HEK293T (cell line): ENCODE measurements at regions of chr2 and their contacts with region 1.

Region 1: DNA sequence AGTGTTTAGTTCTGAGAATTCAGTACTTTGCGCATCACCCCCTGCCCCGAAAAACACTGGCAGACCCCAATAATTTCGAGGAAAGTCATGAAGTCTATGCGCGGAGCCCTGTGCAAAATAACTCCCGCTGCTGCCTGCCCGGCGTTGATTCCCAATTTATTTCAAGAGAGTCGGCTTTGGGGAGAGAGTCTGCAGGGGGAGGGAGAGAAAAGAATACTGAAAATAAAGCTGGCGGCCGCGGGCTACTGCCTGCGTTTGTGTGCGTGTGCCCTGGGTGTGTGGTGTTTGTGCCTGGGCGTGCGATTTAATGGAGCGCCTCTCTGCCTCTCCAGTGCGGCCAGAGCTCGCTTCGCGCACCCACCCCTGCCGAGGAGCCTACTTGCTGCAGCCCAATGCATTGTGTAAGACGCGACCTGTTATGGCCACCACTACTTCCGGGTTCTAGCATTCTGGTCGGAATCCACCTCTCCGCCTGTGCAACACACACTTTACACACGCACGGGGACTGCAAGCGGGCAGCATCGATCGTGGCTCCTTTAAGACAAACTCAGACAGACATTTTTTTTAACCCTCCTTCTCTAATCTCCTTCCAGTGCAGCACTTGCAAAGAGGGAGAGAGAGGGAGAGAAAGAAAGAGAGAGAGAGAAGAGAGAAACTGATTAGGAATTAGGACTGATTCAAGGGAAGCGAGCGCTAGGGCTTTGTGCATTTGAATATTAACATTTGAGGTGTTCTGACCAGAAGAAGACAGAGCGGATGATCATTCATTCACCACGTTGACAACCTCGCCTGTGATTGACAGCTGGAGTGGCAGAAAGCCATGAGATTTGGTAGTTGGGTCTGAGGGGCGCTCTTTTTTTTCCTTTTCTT is at the start of gene MEIS1:
- DNase-seq: peak; percentile 76

Region 2: DNA sequence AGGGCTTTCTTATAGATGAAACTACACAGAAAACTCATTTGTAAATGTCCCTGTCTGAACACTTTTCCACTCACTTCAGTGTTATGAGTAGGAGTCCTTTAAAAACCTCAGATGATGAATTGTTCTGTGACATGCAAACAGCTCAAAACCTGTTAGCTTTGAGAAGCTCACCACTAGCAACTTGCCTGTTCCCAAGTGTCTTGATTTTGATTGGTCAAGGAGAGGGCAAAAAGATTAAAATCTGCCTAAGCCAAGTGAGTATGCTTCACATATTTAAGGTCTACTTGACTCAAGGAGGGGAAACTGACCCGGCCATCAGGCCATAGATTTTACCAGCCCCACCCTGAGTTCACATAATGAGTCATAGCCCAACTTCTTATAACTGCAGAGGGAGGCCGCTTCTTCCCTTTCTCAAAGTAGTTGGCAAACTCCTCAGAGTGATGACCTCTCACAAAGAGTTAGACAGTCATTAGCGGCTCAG is 45.2 kb before region 1 on chr2:
- CTCF ChIA-PET with region 1: no interaction called
- POLR2A ChIA-PET with region 1: interaction called, 19 read pairs
- DNase-seq: peak; percentile 21

Region 3: GRCh38 chr2:66497431-66498288 is 62.7 kb after region 1 on chr2:
- CTCF ChIA-PET with region 1: interaction called, 7 read pairs
- POLR2A ChIA-PET with region 1: interaction called, 25 read pairs
- DNase-seq: no peak

Region 4: GRCh38 chr2:66553370-66553769 is 118.5 kb after region 1 on chr2:
- CTCF ChIA-PET with region 1: interaction called, 4 read pairs
- POLR2A ChIA-PET with region 1: interaction called, 25 read pairs
- DNase-seq: no peak

Region 5: DNA sequence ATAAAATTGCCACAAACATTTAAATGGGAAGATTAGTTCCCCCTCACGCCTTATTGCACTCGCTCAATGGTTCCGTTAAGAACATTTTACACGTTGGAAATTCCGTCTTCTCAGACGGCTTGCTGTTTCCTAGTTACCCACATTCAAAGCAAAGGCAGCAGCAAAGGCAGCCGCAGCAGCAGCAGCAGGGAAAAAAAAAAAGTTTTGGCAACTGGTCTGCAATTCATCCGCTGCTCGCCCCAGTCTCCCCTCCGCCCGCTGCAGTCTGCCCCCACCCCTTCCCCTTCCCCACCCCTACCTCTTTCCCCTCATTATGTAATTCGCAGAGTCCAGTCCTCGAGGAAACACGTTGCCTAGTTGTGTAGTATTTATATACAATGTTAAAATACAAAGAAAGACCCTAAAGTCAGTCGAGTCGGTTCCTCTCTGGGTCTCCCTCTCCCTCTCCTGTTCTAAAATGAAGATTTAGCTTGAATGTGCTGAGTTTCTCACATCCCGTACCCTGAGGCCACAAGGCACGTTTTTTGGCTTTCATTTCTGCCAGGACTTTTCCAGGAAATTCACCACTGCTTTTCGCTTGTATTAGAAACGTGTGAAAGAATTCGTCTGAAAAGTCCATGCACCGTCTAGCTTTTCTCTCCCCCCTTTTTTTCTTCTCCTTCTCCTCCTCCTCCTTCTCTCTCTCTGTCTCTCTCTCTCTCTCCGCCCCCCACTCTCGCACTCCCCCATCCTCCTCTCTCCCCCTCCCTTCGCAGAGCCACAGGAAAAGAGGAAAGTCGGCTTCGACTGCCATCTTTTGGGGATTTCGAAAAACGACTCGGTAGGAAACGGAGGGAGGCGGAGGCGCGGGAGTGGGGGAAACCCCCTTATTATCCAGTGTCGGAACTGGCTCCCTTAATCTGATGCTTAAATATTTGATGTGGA is 140.0 kb after region 1 on chr2:
- CTCF ChIA-PET with region 1: interaction called, 17 read pairs
- POLR2A ChIA-PET with region 1: interaction called, 64 read pairs
- DNase-seq: peak; percentile 65